Activated CD8-positive, alpha-beta T cell treated with anti-CD3 and anti-CD28 coated beads for 36 hours (primary cell): ENCODE measurements at regions of chr11 and their contacts with region 1.

Region 1: GRCh38 chr11:3378426-3379423 is at the start of gene ZNF195:
- DNase-seq: peak; percentile 100
- ATAC-seq: peak; percentile 100
- H3K4me3 Mint-ChIP-seq: peak within 1 kb of the TSS; percentile 91
- H3K27ac Mint-ChIP-seq: peak within 1 kb of the TSS; percentile 96
- H3K4me1 Mint-ChIP-seq: peaks cover 46% of the 10 kb centered on the region
- H3K27me3 Mint-ChIP-seq: no peaks in the 10 kb centered on the region
- CTCF ChIP-seq: no peak
- total RNA-seq, gene ZNF195: 34.3 to 37.6 TPM

Region 2: DNA sequence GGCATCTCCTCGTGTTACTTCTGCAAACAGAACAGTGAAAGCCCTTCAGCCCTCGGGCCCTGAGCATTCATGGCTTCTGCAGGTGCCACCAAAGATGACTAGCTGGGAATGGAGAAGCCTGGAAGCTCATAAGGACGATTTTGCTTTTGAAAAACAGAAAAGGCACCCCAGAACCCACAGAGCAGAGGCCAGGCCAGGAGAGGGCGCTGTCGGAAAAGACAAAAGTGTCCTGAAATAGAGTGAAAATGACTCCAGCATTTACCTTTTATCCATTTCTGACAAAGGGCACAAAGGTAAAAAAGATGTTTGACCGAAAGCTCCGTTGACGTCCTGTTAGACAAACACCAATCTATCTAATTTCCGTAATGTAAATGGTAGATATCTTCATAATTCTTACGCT is 37.4 kb before region 1 on chr11:
- CTCF ChIA-PET with region 1: interaction called, 32 read pairs
- POLR2A ChIA-PET with region 1: no interaction called
- intact Hi-C with region 1: no loop called
- DNase-seq: peak; percentile 88
- ATAC-seq: peak; percentile 56
- H3K4me3 Mint-ChIP-seq: no peak overlapping the region
- H3K27ac Mint-ChIP-seq: no peak overlapping the region
- H3K4me1 Mint-ChIP-seq: peaks cover 3% of the 10 kb centered on the region
- H3K27me3 Mint-ChIP-seq: peaks cover 30% of the 10 kb centered on the region
- CTCF ChIP-seq: peak; percentile 91

Region 3: DNA sequence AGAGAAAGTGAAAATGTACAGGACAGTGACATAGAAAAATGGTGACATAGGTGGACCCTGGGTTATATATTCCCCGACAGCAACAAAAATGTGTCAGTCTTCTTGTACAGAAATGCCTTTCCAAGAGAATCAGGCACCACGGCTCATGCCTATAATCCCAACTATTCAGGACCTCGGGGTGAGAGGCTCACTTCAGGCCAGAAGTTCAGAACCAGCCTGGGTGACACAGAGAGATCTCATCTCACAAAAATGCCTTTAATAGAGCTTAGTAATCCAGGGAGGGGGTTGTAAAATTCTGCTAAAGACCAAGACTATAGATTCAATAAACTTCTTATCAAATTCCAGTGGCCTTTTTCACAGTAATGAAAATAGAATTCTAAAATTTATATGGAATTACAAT is 10.5 kb before region 1 on chr11:
- CTCF ChIA-PET with region 1: no interaction called
- POLR2A ChIA-PET with region 1: interaction called, 11 read pairs
- intact Hi-C with region 1: no loop called
- DNase-seq: no peak
- ATAC-seq: no peak
- H3K4me3 Mint-ChIP-seq: no peak overlapping the region
- H3K27ac Mint-ChIP-seq: no peak overlapping the region
- H3K4me1 Mint-ChIP-seq: peaks cover 15% of the 10 kb centered on the region
- H3K27me3 Mint-ChIP-seq: no peaks in the 10 kb centered on the region
- CTCF ChIP-seq: no peak

Region 4: DNA sequence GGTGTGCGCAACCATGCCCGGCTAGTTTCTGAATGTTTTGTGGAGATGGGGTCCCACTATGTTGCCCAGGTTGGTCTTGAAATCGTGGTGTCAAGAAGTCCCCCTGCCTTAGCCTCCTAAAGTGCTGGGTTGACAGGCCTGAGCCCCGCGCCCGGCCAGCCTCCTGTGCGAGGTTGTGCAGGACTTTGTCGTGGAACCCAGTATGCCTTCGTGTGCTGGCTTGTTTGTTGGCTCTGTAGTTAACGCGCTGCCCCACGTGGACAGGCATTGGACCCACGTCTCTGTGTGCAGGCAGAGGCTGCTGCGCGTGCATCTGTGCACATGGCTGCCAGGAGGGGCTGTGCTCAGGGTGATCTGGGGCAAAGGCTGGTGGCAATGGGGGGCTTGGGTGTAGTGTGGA is 34.1 kb after region 1 on chr11:
- CTCF ChIA-PET with region 1: interaction called, 31 read pairs
- POLR2A ChIA-PET with region 1: no interaction called
- intact Hi-C with region 1: no loop called
- DNase-seq: no peak
- ATAC-seq: no peak
- H3K4me3 Mint-ChIP-seq: no peak overlapping the region
- H3K27ac Mint-ChIP-seq: no peak overlapping the region
- H3K4me1 Mint-ChIP-seq: peaks cover 2% of the 10 kb centered on the region
- H3K27me3 Mint-ChIP-seq: no peaks in the 10 kb centered on the region
- CTCF ChIP-seq: no peak